ENCODE measurements at regions of chr6 and their contacts with region 1.

Region 1: DNA sequence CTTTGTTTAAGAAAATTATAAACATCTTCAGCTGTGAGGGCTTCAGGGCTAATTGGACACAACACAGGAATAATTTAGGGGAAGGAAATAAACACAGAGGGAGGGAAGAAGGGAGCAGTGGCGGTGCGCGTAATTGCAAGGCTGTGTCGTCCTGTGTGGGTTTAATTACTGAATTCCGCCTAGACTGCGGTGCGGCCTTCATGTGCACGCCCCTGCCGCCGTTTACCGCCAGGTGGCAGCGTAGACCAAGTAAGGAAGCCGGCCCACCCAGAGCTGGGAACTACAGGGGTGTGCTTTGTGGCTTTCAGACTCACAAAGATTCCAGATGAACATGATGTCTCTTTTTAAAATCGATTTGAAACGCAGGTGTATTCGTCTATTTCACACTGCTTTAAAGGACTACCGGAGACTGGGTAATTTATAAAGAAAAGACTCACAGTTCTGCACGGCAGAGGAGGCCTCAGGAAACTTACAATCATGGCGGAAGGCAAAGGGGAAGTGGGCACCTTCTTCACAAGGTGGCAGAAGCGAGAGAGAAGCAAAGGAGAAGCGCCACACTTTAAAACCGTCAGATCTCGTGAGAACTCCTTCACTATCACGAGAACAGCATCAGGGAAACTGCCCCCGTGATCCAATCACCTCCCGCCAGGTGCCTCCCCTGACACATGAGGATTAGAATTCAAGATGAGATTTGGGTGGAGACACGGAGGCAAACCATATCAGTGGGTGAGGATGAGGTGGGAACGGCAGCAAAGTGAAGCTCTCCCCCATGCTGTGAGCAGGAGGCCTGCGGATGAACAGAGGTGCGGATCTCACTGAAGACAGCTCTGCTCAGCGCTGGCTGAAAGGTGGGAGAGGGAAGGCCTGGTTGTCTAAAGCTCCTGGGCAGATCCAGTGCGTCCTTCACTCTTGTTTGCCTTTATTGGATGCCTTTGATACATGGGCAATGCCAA is 222.0 kb upstream of the PDE10A start:
- DNase-seq: peak; percentile 75
- H3K4me3 Mint-ChIP-seq: no peak overlapping the region
- H3K27ac Mint-ChIP-seq: no peak overlapping the region
- H3K4me1 Mint-ChIP-seq: peaks cover 6% of the 10 kb centered on the region
- H3K27me3 Mint-ChIP-seq: peaks cover 2% of the 10 kb centered on the region

Region 2: DNA sequence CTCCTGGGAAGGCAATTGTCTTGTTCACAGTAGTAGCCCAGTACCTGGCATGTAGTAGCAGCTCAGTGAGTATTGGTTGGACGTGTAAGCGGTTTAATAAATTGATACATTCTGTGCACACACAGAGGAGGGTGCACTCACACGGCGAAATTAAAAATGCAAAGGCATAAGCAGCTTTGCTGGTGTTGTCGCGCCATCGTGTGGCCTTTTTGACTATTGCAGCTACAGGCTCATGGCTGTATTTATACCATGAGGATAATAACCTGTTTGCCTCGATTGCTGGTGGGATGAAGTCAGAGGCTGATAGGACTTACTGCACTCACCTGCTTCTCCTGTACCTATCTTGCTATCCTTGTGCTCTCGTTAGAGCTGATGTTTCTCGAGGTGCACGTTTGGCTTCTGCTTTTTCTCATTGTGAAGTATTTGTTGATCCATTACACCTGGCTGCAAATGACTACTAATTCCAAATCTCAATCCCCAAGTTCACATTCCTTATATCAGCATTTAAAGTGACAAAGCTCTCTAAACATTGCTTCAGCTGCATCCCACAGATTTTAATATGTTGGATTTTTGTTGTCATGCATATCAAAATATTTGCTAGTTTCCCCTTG is 221.1 kb after region 1 on chr6:
- CTCF ChIA-PET with region 1: interaction called, 25 read pairs
- DNase-seq: peak; percentile 80
- H3K4me3 Mint-ChIP-seq: no peak overlapping the region
- H3K27ac Mint-ChIP-seq: no peak overlapping the region
- H3K4me1 Mint-ChIP-seq: no peaks in the 10 kb centered on the region
- H3K27me3 Mint-ChIP-seq: peaks cover 24% of the 10 kb centered on the region

Measured in activated naive CD4-positive, alpha-beta T cell treated with anti-CD3 and anti-CD28 coated beads, Interleukin-2, amount 10 ng/mL, durations not matched to agents 7 days and 5 days (primary cell).